PC-9 (cell line): ENCODE measurements at regions of chr7 and their contacts with region 1.

Region 1: DNA sequence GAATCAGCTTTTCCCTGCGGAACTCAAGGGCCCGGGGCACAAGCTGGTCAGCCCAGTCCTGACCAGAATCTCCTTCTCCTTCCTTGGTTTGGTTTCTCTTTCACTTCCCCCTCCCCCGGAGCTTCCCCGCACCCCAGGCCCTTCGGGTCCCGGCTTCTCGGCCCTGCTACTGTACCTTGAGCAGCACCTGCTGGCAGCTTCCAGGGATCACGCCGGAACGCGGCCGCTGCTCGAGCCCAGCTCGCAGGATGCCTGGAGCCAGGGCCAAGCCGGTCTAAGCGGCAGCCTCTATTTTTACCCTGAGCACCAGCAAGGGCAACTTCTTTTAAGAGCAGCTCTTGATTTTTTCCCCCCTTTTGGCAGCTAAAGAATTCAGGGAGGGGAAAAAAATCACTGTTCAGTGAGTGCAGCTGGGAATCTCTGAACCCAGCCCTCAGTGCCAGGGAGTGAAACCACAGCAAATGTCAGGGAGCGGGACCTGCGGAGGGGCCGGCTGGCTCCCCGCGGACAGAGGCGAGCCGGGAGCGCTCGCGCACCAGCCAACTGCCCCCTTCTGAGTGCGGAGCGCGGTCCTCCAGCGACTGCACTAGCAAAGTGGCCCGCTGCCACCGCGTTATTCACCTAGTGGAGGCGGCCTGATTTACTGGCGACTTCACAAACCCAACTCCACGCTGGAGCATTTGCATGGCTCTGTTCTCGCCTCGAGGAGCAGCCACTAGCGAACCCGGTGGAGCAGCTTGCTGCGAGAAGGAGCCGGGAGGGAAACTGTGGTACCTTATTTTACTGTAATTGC is 2.4 kb upstream of the INHBA start:
- DNase-seq: peak; percentile 80 to 96
- H3K4me3 ChIP-seq: peak overlapping the region; percentile 54; the same call in 1 of the 2 replicates
- H3K27ac ChIP-seq: peak overlapping the region; percentile 53; the same call in 1 of the 2 replicates
- H3K4me1 ChIP-seq: peaks cover 43% of the 10 kb centered on the region
- H3K27me3 ChIP-seq: no peaks in the 10 kb centered on the region
- CTCF ChIP-seq: peak; percentile 97

Region 2: GRCh38 chr7:40437498-40437897 is 1267.8 kb before region 1 on chr7:
- CTCF ChIA-PET with region 1: no interaction called
- POLR2A ChIA-PET with region 1: no interaction called
- intact Hi-C with region 1: loop called (anchors 10 kb)
- DNase-seq: peak; percentile 56 to 73
- H3K4me3 ChIP-seq: no peak overlapping the region
- H3K27ac ChIP-seq: peak overlapping the region; percentile 6; the same call in 1 of the 2 replicates
- H3K4me1 ChIP-seq: peaks cover 11% of the 10 kb centered on the region; the same call in 1 of the 2 replicates
- H3K27me3 ChIP-seq: no peaks in the 10 kb centered on the region
- CTCF ChIP-seq: no peak

Region 3: GRCh38 chr7:40833888-40834234 is 871.4 kb before region 1 on chr7:
- CTCF ChIA-PET with region 1: no interaction called
- POLR2A ChIA-PET with region 1: no interaction called
- intact Hi-C with region 1: loop called (anchors 1 kb)
- DNase-seq: no peak
- H3K4me3 ChIP-seq: no peak overlapping the region
- H3K27ac ChIP-seq: no peak overlapping the region
- H3K4me1 ChIP-seq: no peaks in the 10 kb centered on the region
- H3K27me3 ChIP-seq: no peaks in the 10 kb centered on the region
- CTCF ChIP-seq: peak; percentile 60

Region 4: GRCh38 chr7:41003031-41003925 is 702.0 kb before region 1 on chr7:
- CTCF ChIA-PET with region 1: interaction called, 12 read pairs
- POLR2A ChIA-PET with region 1: interaction called, 7 read pairs
- intact Hi-C with region 1: loop called (anchors 1 kb)
- DNase-seq: peak; percentile 59 to 90
- H3K4me3 ChIP-seq: no peak overlapping the region
- H3K27ac ChIP-seq: peak overlapping the region; percentile 10
- H3K4me1 ChIP-seq: peaks cover 54% of the 10 kb centered on the region
- H3K27me3 ChIP-seq: no peaks in the 10 kb centered on the region
- CTCF ChIP-seq: peak; percentile 95

Region 5: GRCh38 chr7:41107668-41108448 is 597.4 kb before region 1 on chr7:
- CTCF ChIA-PET with region 1: interaction called, 8 read pairs
- POLR2A ChIA-PET with region 1: interaction called, 11 read pairs
- intact Hi-C with region 1: loop called (anchors 1 kb)
- DNase-seq: peak; percentile 92 to 100
- H3K4me3 ChIP-seq: peak overlapping the region; percentile 45; the same call in 1 of the 2 replicates
- H3K27ac ChIP-seq: peak overlapping the region; percentile 93
- H3K4me1 ChIP-seq: peaks cover 64% of the 10 kb centered on the region
- H3K27me3 ChIP-seq: no peaks in the 10 kb centered on the region
- CTCF ChIP-seq: no peak

Region 6: GRCh38 chr7:41247143-41247865 is 458.0 kb before region 1 on chr7:
- CTCF ChIA-PET with region 1: no interaction called
- POLR2A ChIA-PET with region 1: no interaction called
- intact Hi-C with region 1: loop called (anchors 1 kb)
- DNase-seq: peak; percentile 60 to 99
- H3K4me3 ChIP-seq: no peak overlapping the region
- H3K27ac ChIP-seq: peak overlapping the region; percentile 70
- H3K4me1 ChIP-seq: peaks cover 32% of the 10 kb centered on the region
- H3K27me3 ChIP-seq: no peaks in the 10 kb centered on the region
- CTCF ChIP-seq: no peak

Region 7: DNA sequence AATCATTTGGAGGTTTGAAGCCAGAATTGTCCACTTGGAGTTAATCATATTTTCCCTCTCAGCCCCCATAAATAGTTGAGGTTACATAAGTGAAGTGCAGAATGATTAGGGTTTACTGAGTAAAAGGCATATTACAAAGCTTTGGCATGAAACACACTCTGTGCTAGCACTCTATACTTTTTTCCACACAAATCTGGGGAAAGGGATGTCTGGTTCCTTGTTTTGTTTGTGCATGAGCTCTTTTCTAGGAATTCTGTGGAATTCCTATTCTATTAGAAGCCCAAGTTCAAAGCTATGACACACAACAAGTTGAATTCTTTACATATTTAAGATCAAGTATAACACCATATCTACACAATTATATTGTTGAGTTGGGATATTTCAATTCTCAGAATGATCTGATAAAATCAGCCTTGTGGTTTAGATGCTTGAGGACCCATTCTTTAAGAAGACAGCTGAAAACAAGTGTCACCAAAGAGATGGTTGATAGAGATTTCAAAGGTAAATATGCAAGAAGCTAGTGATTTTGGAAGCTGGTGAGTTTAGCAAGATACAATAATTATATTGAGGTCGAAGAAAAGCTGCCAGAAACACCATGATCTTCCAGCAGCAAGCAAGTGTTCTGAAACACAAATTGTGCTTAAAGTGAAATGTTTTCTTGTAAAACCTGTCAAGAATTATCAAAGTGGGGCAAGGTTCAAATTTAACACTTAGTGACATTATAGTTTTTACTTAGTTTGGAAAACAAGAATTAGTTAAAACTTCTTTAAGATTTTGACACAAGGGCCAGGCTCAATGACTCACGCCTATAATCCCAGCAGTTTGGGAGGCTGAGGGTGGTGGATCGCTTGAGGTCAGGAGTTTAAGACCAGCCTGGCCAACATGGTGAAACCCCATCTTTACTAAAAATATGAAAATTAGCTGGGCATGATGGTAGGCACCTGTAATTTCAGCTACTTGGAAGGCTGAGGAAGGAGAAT is 125.1 kb before region 1 on chr7:
- CTCF ChIA-PET with region 1: interaction called, 13 read pairs
- POLR2A ChIA-PET with region 1: no interaction called
- intact Hi-C with region 1: loop called (anchors 1 kb)
- DNase-seq: peak; percentile 40 to 99
- H3K4me3 ChIP-seq: no peak overlapping the region
- H3K27ac ChIP-seq: peak overlapping the region; percentile 74
- H3K4me1 ChIP-seq: peaks cover 35% of the 10 kb centered on the region
- H3K27me3 ChIP-seq: no peaks in the 10 kb centered on the region
- CTCF ChIP-seq: no peak